Dorsolateral prefrontal cortex (tissue), 120 donors: ENCODE measurements at regions of chr9 and their contacts with region 1.

Region 1: GRCh38 chr9:37592108-37592951 is at the start of gene TOMM5:
- DNase-seq: peak; percentile 89 to 96 (median 93)
- H3K4me3 ChIP-seq: peak within 1 kb of the TSS; percentile 63 to 100 (median 94)
- H3K27ac ChIP-seq: peak within 1 kb of the TSS in 58 of 59 donors; percentile 43 to 97 (median 87)
- H3K27me3 ChIP-seq: no peaks in the 10 kb centered on the region
- CTCF ChIP-seq: peak in 41 of 56 donors; percentile 3 to 59 (median 35)
- total RNA-seq, gene TOMM5: 30.0 to 71.9 (median 50.0) TPM

Region 2: GRCh38 chr9:36092509-36093215 is 1499.7 kb before region 1 on chr9:
- intact Hi-C with region 1: no loop called
- DNase-seq: no peak
- H3K4me3 ChIP-seq: no peak overlapping the region
- H3K27ac ChIP-seq: peak overlapping the region in 2 of 59 donors; percentile 13 to 14
- H3K27me3 ChIP-seq: no peaks in the 10 kb centered on the region
- CTCF ChIP-seq: no peak

Region 3: DNA sequence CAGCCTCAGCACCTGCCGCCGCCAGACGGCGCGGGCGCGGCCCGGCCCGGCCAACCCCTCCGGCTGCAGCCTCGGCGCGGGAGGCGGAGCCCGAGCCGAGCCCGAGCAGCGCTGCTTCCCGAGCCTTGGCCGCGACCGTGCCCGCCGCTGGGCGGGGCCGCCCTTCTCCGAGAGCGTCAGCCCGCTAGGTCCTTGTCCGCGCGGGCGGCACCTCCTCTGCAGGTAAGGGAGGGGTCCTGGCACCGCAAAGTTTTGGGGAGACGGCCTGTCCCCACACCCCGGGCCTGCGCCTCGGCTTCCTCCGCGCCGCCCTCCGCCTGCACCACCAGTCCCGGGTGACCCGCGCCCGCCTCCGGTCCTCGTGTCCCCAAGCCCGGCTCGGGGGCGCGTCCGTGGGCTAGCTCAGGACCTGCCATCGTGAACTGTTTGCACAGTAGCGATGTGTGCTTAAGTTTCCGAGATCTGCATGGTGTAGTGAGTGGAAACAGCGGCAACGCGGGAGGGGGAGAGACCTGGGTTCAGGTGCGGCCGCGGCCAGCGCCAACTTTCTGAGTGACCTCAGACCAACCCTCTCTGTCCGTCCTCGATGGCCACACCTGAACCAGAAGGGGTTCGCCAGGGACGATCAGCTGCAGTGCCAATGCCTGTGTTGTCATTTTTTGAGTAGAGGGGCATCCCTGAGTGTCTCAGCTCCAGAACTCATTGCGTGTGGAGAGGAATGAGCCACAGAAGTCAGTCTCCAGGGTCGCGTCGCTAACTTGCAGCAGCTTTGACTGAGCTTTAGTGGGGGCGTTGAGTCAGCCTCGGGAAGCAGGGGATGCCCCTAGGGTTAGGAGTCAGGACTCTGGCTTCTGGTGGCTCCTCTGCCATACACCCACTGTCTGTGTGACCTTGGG is 58.8 kb after region 1 on chr9 and contains the start of gene FRMPD1:
- intact Hi-C with region 1: loop called in 1 of 2 experiments (anchors 5 kb)
- DNase-seq: peak in 3 of 10 donors; percentile 22 to 70 (median 25)
- H3K4me3 ChIP-seq: peak within 1 kb of the TSS; percentile 55 to 98 (median 74)
- H3K27ac ChIP-seq: peak within 1 kb of the TSS in 18 of 59 donors; percentile 0 to 79 (median 32)
- H3K27me3 ChIP-seq: peaks cover 0 to 8% (median 0%) of the 10 kb centered on the region in 45 donors
- CTCF ChIP-seq: no peak
- total RNA-seq, gene FRMPD1: 2.1 to 6.9 (median 4.1) TPM

Region 4: DNA sequence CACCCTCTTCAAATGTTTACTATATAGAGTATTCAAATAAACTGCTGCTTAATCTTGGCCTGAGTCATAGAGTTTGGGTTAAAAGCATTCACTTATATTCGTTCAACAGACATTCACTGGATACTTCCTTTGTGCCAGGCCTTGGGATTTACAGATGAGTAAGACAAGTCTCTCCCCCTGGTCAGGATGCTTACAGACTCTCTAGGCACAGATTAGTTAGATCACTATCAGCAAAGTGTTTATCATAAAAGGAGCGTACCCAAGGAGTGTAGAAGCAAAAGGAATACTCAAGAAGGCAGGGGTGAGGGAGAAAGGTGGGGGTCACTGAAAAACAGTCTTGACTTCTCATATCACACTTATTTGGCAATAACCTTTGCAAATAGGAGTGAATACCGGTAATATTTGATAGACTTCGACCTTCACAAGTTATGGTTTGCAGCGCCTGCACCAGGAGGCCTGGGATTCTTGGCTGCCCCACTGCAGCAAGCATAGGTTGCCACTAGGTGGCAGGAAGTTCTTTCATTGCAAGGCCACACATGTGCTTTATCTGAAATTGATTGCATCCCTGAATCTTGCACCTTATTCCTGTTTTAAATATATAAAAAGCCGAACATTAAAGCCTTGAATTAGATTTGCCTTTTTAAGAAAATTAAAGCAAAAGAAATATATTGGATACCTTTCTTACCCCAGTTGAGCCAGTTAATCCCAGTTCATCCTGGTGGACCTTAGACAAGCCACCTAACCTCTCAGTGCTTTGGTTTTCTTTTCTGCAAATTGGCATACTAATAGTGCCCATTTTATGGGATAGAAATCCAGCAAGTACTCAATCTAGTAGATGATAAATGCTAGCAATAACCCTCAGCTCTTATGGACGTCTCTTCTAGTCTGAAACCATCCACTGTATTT is 154.8 kb after region 1 on chr9:
- intact Hi-C with region 1: loop called (anchors 5 to 10 kb)
- DNase-seq: peak in 8 of 10 donors; percentile 41 to 73 (median 65)
- H3K4me3 ChIP-seq: no peak overlapping the region
- H3K27ac ChIP-seq: no peak overlapping the region
- H3K27me3 ChIP-seq: no peaks in the 10 kb centered on the region
- CTCF ChIP-seq: peak; percentile 61 to 95 (median 88)

Region 5: GRCh38 chr9:37784616-37785483 is 192.5 kb after region 1 on chr9 and contains the start of gene EXOSC3:
- intact Hi-C with region 1: loop called in 1 of 2 experiments (anchors 10 kb)
- DNase-seq: peak; percentile 84 to 95 (median 92)
- H3K4me3 ChIP-seq: peak within 1 kb of the TSS; percentile 71 to 100 (median 94)
- H3K27ac ChIP-seq: peak within 1 kb of the TSS in 58 of 59 donors; percentile 20 to 93 (median 79)
- H3K27me3 ChIP-seq: peaks cover 0 to 3% (median 0%) of the 10 kb centered on the region in 45 donors
- CTCF ChIP-seq: peak in 37 of 56 donors; percentile 6 to 59 (median 23)
- total RNA-seq, gene EXOSC3: 23.5 to 65.0 (median 36.8) TPM